ENCODE measurements at regions of chr1 and their contacts with region 1.

Region 1: GRCh38 chr1:89022167-89022959 is at the start of gene GBP3:
- DNase-seq: no peak
- H3K4me3 ChIP-seq: peak within 1 kb of the TSS; percentile 38
- H3K27ac ChIP-seq: peak within 1 kb of the TSS; percentile 81
- H3K4me1 ChIP-seq: no peaks in the 10 kb centered on the region
- H3K27me3 ChIP-seq: no peaks in the 10 kb centered on the region
- CTCF ChIP-seq: no peak
- total RNA-seq, gene GBP3: 38.7 to 103 TPM

Region 2: DNA sequence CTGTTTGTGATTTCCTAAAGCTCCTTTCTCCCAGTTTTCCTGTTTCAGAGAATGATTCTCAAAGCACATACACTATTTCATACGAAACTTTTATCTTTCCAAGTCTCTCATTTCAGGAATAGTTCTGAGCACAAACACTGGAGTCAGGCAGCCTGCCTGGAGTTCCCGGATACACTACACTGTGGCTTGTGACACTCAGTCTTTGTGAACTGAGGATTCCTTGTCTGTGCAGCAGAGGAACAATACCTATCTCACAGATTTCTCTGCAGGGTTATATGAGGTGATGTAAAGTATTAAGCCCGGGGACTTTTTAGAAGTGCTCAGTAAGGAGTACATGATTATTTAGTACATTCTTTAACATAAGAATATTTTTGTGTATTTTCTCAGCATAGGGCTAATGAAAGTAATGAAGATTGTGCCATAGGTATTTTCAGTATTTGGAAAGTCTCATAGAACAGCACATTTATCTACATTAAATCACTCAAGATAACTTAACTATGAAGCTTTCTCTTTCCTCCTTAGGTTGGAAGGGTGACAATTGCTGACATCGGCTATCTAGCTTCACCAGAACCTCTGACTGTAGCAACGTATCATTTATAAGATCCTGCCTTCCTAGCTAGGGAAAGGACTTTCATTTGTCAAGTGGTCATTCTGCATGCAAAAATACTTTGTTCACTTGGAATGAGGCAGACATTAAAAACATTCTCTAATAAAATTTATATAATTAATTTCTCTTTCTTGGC is 90.7 kb after region 1 on chr1:
- intact Hi-C with region 1: loop called (anchors 10 kb)
- DNase-seq: no peak
- H3K4me3 ChIP-seq: no peak overlapping the region
- H3K27ac ChIP-seq: no peak overlapping the region
- H3K4me1 ChIP-seq: no peaks in the 10 kb centered on the region
- H3K27me3 ChIP-seq: no peaks in the 10 kb centered on the region
- CTCF ChIP-seq: no peak

Measured in colonic mucosa (tissue), 4 donors.